ENCODE measurements at regions of chr14 and their contacts with region 1.

Region 1: DNA sequence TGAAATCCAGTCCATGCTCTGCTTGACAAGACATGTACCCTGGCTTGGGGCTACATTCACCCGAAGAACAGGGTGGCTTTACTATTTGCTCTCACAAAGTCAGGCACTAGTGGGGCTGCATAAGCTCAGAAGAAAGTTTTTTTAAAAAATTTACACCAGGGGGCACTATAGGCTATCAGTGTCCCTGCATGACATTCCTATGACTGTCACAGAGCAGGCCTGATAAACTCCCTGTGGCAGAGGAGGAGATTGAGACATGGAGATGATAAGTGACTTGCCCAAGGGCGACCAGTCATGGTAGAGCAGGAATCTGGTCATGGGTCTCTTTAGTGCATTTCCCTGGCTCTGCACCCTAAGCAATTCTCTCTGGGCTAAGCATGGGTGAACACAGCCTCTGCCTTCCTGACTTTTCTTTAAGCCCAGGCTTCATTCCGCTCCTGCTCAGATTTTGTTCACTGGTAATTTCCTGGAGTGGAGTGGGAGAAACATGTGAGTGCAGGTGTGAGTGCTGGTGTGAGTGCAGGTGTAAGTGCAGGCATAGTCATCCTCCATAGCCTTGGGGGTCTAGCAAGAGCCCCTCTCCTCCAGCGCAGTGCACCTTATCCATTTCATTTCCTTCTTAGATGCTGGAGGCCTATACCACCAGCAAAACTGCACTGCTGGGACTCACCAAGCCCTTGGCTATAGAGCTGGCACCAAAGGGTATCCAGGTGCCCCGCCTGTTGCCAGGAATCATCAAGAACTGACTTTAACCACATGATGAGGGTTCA is 91.6 kb downstream of the DHRS2 start:
- DNase-seq: peak in 1 of 6 donors; percentile 21
- ATAC-seq: peak; percentile 77 to 97 (median 93)
- H3K4me3 ChIP-seq: no peak overlapping the region
- H3K27ac ChIP-seq: no peak overlapping the region
- H3K4me1 ChIP-seq: no peaks in the 10 kb centered on the region
- H3K27me3 ChIP-seq: no peaks in the 10 kb centered on the region
- CTCF ChIP-seq: peak in 3 of 4 donors; percentile 15 to 24 (median 21)

Region 2: DNA sequence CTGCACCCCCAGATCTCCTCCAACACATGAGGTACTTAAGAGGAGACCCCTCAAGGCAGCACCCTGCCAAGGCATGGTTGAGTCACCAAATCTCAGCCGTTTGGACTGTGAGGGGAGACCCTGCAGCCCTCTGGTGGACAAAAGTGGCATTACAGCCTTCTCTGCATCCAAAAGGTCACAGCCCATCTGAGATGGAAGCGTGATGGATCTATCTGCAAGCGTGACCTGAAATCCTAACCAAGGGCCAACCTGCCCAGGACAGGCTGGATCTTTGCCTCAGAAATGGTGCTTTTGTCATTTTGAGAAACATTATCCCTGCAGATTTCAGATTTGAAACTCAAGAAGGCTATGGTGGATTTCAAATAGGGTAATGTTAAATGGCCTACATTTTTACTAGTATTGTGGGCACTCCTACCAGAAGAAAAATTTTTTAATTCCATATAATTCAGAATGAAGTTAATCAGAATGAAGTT is 202.1 kb after region 1 on chr14:
- intact Hi-C with region 1: loop called in 1 of 3 experiments (anchors 10 kb)
- DNase-seq: peak in 5 of 6 donors; percentile 63 to 87 (median 77)
- ATAC-seq: peak; percentile 86 to 97 (median 94)
- H3K4me3 ChIP-seq: no peak overlapping the region
- H3K27ac ChIP-seq: no peak overlapping the region
- H3K4me1 ChIP-seq: no peaks in the 10 kb centered on the region
- H3K27me3 ChIP-seq: no peaks in the 10 kb centered on the region
- CTCF ChIP-seq: peak; percentile 75 to 92 (median 87)